ENCODE measurements at regions of chr1 and their contacts with region 1.

Region 1: GRCh38 chr1:154546264-154547063 is 12.0 kb downstream of the UBE2Q1 start:
- DNase-seq: peak; percentile 37
- H3K4me3 ChIP-seq: no peak overlapping the region
- H3K27ac ChIP-seq: no peak overlapping the region
- H3K4me1 ChIP-seq: peaks cover 27% of the 10 kb centered on the region
- H3K27me3 ChIP-seq: peaks cover 4% of the 10 kb centered on the region
- CTCF ChIP-seq: peak; percentile 84

Region 2: DNA sequence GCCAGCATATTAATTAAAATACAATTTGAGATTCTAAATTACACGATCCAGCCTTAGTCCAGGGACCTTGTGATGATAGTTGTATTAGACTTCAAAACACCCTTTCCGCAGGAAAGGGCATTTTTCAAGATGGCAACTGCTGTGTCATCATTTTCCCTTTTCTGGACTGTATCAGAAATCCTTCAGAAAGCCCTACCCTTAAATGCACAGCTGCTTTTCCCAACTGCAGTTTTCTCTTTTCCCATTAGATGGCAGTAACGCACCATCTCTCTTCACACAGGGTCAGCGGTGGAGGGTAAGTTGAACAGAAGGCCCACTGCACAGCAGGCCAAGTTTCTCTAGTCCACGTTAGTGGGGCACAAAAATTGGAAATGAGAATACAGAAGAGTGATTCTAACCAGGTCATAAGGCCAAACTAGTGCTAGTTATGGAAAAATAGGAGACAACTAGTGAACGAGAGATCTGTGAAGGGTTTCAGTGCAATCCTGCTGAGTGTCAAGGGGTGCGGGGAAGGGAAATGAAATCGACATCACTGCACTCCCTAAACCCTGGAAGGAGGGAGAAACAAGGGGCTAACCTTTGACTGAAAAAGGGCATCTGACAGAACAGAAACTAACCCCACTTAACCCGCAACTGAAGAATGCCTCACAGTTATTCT is 66.6 kb before region 1 on chr1:
- intact Hi-C with region 1: loop called (anchors 5 kb)
- DNase-seq: no peak
- H3K4me3 ChIP-seq: no peak overlapping the region
- H3K27ac ChIP-seq: peak overlapping the region; percentile 56
- H3K4me1 ChIP-seq: peaks cover 40% of the 10 kb centered on the region
- H3K27me3 ChIP-seq: no peaks in the 10 kb centered on the region
- CTCF ChIP-seq: peak; percentile 99

Region 3: DNA sequence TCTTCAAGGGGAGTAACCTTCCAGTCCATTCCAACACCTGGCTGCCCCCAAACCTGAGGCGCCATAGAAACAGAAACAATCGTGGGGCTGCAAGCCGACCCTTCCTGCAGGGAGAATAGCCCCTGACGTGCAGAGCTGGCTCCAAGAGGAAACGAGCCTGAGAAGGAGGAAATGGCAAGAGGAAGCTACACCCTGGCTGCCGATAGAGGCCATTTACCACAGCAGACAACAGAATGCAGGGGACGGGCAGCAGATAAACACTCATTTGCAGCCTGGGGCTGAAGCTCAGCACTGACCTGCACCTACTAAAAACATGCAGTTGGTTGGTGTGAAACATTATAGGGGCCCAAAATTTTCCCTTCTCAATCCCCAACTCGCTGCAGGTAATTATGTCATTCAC is 53.2 kb before region 1 on chr1:
- intact Hi-C with region 1: no loop called
- DNase-seq: peak; percentile 53
- H3K4me3 ChIP-seq: peak overlapping the region; percentile 38
- H3K27ac ChIP-seq: peak overlapping the region; percentile 94
- H3K4me1 ChIP-seq: peaks cover 96% of the 10 kb centered on the region
- H3K27me3 ChIP-seq: no peaks in the 10 kb centered on the region
- CTCF ChIP-seq: peak; percentile 20

Region 4: DNA sequence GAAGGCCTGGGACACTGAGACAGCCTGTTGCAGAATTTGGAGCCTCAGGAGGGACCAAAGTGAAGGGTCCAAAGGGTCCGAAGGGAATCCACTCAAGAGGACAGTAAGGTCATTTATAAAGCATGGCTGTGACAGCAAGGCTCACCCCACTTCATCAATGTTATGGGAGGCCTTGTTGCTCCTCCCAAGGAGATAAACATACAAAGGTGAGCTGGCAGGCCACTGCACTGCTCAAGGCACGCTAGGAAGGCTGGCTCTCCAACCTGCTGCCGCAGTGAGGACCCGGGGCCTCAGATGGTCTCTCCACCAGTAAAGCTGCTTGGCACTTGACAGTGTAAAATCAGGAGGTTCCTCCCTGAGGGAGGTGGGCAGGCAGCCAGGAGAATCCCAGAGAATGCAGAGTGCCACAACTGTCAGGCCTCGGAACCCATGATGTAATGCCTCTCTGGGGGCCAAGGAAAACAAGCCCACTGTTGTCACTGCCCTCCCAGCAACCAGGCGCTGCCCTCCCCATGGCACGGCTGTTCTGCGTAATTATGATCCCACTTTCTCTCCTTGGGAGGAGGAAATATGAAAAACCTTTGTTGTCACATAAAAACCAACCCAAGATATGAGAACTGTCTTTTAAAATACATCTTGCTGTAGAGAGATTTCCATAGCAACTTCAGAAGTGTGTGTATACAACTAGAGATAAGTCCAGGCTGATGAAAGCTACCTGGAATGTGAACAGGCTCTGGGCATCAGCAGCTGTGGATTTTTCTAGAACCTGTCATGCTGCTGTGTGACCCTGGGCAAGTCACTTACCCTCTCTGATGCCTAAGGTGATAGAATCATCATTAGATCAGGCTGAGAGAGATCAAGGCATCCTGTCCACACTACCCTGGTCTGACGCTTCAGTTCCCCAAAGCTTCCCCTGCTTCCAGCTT is 221.1 kb after region 1 on chr1:
- intact Hi-C with region 1: no loop called
- DNase-seq: peak; percentile 64
- H3K4me3 ChIP-seq: no peak overlapping the region
- H3K27ac ChIP-seq: peak overlapping the region; percentile 55
- H3K4me1 ChIP-seq: peaks cover 24% of the 10 kb centered on the region
- H3K27me3 ChIP-seq: no peaks in the 10 kb centered on the region
- CTCF ChIP-seq: no peak